GM13977 (cell line): ENCODE measurements at regions of chr17 and their contacts with region 1.

Region 1: DNA sequence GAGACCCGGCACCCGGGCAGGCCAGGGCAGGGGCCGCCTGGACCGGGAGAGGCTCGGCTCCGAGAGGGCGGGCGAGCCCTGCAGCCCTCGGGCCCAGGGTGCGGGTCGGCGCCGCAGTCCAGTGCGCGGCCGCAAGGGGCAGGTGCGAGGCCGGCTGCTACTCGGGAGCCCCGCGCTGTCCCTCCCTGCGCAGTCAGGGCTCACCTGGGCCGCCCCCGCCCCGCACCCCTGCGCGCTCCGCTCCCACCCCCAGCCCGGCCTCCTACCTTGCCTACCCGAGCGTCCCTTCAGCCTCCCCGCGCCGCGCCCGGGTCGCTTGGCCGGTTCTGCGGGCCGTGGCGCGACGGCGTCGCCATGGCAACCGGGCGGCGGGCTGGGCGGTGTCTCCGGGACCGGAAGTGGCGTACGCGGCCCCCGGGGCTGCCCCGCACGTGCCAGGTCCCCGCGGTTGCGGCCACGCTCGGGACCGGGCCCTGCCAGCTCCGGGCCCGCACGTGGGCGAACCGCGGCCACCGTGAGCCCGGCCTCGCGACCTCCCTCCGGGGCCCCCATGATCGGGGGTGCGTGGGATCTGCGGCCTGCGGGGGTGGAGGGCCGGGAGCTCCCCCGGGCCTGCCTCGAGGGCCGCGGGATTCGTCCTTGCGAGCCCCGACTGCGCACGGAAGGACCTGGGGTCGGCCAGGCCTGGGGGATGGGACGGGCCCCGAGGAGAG is at the start of gene CYB561:
- DNase-seq: peak; percentile 96
- CTCF ChIP-seq: peak; percentile 50

Region 2: GRCh38 chr17:63658366-63658765 is 212.2 kb after region 1 on chr17:
- in situ Hi-C with region 1: no loop called
- DNase-seq: no peak
- CTCF ChIP-seq: no peak

Region 3: DNA sequence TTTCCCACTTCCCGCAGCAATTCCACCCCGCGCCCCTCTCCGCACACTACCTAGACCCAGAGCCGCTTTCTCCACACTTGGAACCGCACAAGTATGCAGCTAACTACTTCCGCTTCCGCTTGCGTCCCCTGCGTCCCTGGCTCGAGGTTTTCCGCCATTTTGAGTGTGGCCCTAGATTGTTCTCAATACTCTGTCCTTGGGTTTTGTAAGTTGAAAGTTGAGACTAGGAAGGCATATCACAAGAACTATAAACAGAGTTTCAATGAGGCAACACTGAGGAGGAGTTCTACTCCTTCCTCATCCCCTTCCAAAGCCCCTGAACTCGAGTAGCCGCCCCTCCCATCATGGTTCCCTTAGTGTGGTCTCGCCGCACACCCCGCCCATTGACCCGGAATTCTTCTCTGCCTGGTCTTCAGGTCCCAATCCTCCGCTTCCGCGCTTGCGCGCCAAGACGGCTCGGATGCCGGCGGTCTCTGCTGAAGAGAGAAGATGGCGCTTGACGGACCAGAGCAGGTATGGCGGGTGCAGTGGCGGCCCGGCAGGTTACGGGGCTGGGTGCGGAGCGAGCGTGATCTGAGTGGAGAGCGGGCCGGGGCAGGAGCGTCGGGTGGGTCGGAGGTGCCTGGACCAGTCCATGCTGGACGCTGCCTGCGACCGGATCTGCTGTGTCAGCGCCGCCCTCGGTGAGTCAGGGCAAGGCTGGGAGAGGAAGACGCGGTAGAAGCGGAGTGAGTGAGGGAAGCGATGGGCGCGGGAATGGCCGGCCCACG is 381.1 kb after region 1 on chr17 and contains the starts of genes FTSJ3 and PSMC5:
- in situ Hi-C with region 1: loop called (anchors 25 kb)
- DNase-seq: peak; percentile 91
- CTCF ChIP-seq: peak; percentile 77